Heart right ventricle (tissue), 16 donors: ENCODE measurements at regions of chr4 and their contacts with region 1.

Region 1: GRCh38 chr4:186709517-186709916 is 14.1 kb downstream of the FAT1 start:
- DNase-seq: no peak
- ATAC-seq: no peak
- H3K4me3 ChIP-seq: no peak overlapping the region
- H3K27ac ChIP-seq: peak overlapping the region in 1 of 10 donors; percentile 72
- H3K4me1 ChIP-seq: peaks cover 4 to 87% (median 23%) of the 10 kb centered on the region in 9 donors
- H3K27me3 ChIP-seq: no peaks in the 10 kb centered on the region
- CTCF ChIP-seq: no peak

Region 2: GRCh38 chr4:186669159-186669731 is 40.3 kb before region 1 on chr4:
- intact Hi-C with region 1: loop called in 1 of 10 experiments (anchors 5 kb)
- DNase-seq: no peak
- ATAC-seq: peak; percentile 46 to 80 (median 68)
- H3K4me3 ChIP-seq: peak overlapping the region in 1 of 10 donors; percentile 4
- H3K27ac ChIP-seq: peak overlapping the region in 2 of 10 donors; percentile 15 to 28
- H3K4me1 ChIP-seq: peaks cover 0 to 39% (median 24%) of the 10 kb centered on the region in 9 donors
- H3K27me3 ChIP-seq: no peaks in the 10 kb centered on the region
- CTCF ChIP-seq: peak in 8 of 9 donors; percentile 33 to 69 (median 54)